B cell (primary cell): ENCODE measurements at regions of chr1 and their contacts with region 1.

Region 1: GRCh38 chr1:101190441-101190840 is 46.4 kb upstream of the S1PR1 start:
- DNase-seq: no peak
- ATAC-seq: no peak
- H3K4me3 ChIP-seq: no peak overlapping the region
- H3K4me3 Mint-ChIP-seq: no peak overlapping the region
- H3K27ac ChIP-seq: no peak overlapping the region
- H3K27ac Mint-ChIP-seq: no peak overlapping the region
- H3K4me1 ChIP-seq: peaks cover 10% of the 10 kb centered on the region in 2 donors
- H3K4me1 Mint-ChIP-seq: peaks cover 17% of the 10 kb centered on the region
- H3K27me3 ChIP-seq: no peaks in the 10 kb centered on the region
- H3K27me3 Mint-ChIP-seq: no peaks in the 10 kb centered on the region
- CTCF ChIP-seq: no peak

Region 2: GRCh38 chr1:101203820-101204540 is 13.5 kb after region 1 on chr1:
- CTCF ChIA-PET with region 1: no interaction called
- POLR2A ChIA-PET with region 1: no interaction called
- intact Hi-C with region 1: loop called (anchors 1 kb)
- DNase-seq: no peak
- ATAC-seq: no peak
- H3K4me3 ChIP-seq: no peak overlapping the region
- H3K4me3 Mint-ChIP-seq: no peak overlapping the region
- H3K27ac ChIP-seq: no peak overlapping the region
- H3K27ac Mint-ChIP-seq: no peak overlapping the region
- H3K4me1 ChIP-seq: peaks cover 5 to 6% of the 10 kb centered on the region in 2 donors
- H3K4me1 Mint-ChIP-seq: peaks cover 8% of the 10 kb centered on the region
- H3K27me3 ChIP-seq: no peaks in the 10 kb centered on the region
- H3K27me3 Mint-ChIP-seq: no peaks in the 10 kb centered on the region
- CTCF ChIP-seq: no peak

Region 3: GRCh38 chr1:101302831-101303511 is 112.5 kb after region 1 on chr1:
- CTCF ChIA-PET with region 1: no interaction called
- POLR2A ChIA-PET with region 1: no interaction called
- intact Hi-C with region 1: no loop called
- DNase-seq: no peak
- ATAC-seq: no peak
- H3K4me3 ChIP-seq: no peak overlapping the region
- H3K4me3 Mint-ChIP-seq: no peak overlapping the region
- H3K27ac ChIP-seq: no peak overlapping the region
- H3K27ac Mint-ChIP-seq: no peak overlapping the region
- H3K4me1 ChIP-seq: peaks cover 8 to 12% of the 10 kb centered on the region in 2 donors
- H3K4me1 Mint-ChIP-seq: peaks cover 15% of the 10 kb centered on the region
- H3K27me3 ChIP-seq: no peaks in the 10 kb centered on the region
- H3K27me3 Mint-ChIP-seq: no peaks in the 10 kb centered on the region
- CTCF ChIP-seq: no peak

Region 4: DNA sequence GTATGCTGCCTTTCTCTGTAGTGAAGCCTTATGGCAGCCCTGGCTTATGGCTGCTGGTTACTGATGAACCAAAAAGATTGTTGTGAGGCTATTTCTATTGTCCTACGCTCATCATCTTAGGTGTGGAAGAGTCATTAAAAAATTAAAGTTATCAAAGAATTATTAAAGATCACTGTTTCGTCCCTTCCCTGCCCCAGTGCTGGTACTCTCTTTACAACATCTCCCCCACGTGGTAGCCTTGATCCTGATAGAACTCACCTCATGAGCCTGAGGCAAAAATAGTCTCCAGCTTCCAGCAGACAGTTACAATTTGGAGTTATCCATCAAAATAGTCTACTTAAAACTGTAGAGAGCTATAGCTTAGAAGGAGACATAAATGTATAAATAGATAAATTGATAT is 247.9 kb after region 1 on chr1:
- CTCF ChIA-PET with region 1: no interaction called
- POLR2A ChIA-PET with region 1: no interaction called
- intact Hi-C with region 1: no loop called
- DNase-seq: peak; percentile 39
- ATAC-seq: peak; percentile 29
- H3K4me3 ChIP-seq: no peak overlapping the region
- H3K4me3 Mint-ChIP-seq: no peak overlapping the region
- H3K27ac ChIP-seq: no peak overlapping the region
- H3K27ac Mint-ChIP-seq: no peak overlapping the region
- H3K4me1 ChIP-seq: peaks cover 33 to 34% of the 10 kb centered on the region in 2 donors
- H3K4me1 Mint-ChIP-seq: peaks cover 27% of the 10 kb centered on the region
- H3K27me3 ChIP-seq: no peaks in the 10 kb centered on the region
- H3K27me3 Mint-ChIP-seq: no peaks in the 10 kb centered on the region
- CTCF ChIP-seq: peak; percentile 19